Activated naive CD4-positive, alpha-beta T cell treated with anti-CD3 and anti-CD28 coated beads for 36 hours (primary cell): ENCODE measurements at regions of chr4 and their contacts with region 1.

Region 1: GRCh38 chr4:169619959-169620879 is at the start of gene CLCN3:
- DNase-seq: peak; percentile 90
- H3K4me3 Mint-ChIP-seq: peak within 1 kb of the TSS; percentile 93
- H3K27ac Mint-ChIP-seq: peak within 1 kb of the TSS; percentile 96
- H3K4me1 Mint-ChIP-seq: peaks cover 59% of the 10 kb centered on the region
- H3K27me3 Mint-ChIP-seq: no peaks in the 10 kb centered on the region
- total RNA-seq, gene CLCN3: 17.4 to 18.4 TPM

Region 2: DNA sequence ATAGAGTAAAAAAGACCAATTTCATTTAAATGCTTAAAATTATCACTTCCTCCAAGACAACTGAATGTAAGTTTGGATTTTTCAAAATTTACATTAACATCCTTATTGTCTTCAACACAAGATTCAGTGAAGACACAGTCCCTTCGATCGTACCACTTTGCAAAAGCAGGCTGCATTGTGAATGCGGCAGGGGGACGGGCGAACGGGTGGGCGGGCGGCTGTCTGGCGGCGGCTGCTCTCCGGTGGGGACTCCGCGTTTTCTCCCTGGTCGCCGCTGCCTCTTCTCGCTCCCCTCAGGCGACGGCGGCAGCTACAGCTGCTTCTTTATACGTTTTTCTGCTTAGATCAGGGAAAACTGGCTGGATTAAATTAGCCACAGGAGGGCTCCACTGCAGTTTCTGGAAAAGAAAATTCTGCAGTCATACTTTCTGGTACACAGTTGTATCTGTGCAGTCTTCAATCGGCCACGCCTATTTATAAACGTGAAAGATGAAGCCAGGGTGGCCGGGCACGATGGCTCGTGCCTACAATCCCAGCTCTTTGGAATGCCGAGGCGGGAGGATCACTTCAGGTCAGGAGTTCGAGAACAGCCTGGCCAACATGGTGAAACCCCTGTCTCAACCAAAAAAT is 171.4 kb after region 1 on chr4:
- CTCF ChIA-PET with region 1: no interaction called
- intact Hi-C with region 1: loop called (anchors 1 kb)
- DNase-seq: peak; percentile 49
- H3K4me3 Mint-ChIP-seq: peak overlapping the region; percentile 47
- H3K27ac Mint-ChIP-seq: no peak overlapping the region
- H3K4me1 Mint-ChIP-seq: peaks cover 12% of the 10 kb centered on the region
- H3K27me3 Mint-ChIP-seq: peaks cover 43% of the 10 kb centered on the region

Region 3: GRCh38 chr4:169940450-169940849 is 320.2 kb after region 1 on chr4:
- CTCF ChIA-PET with region 1: no interaction called
- intact Hi-C with region 1: no loop called
- DNase-seq: no peak
- H3K4me3 Mint-ChIP-seq: no peak overlapping the region
- H3K27ac Mint-ChIP-seq: no peak overlapping the region
- H3K4me1 Mint-ChIP-seq: no peaks in the 10 kb centered on the region
- H3K27me3 Mint-ChIP-seq: no peaks in the 10 kb centered on the region

Region 4: DNA sequence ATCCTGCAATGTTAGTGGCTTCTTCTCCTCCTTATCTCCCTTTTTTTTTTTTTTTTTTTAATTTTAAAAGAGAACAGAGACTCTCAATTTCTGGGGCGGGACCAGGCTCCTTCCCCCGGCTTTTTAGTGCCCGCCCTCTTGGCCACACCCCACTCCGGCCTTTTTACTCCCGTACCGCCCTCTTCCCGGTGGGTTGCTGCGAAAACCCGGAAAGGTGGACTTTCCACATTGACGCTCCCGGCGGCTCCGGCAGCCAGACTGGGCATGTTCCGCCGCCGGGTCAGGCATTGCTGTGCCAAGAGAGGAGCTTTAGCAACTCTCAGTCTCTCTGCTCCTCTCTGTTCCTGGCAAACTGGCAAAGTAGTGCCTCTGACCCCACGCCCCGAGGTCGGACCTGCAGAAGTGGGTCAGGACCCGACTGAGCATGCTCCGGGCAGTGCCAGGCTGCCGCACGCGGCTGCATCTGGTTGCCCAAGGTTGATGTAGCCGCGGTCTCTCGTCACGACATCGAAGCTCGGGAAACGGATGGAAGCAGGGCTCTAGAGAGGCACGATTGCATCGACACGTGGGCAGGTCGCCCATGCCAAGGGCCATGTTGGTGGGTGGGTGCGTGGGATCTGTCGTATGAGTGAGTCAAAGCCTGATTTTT is 407.1 kb after region 1 on chr4:
- CTCF ChIA-PET with region 1: no interaction called
- intact Hi-C with region 1: loop called (anchors 1 kb)
- DNase-seq: peak; percentile 93
- H3K4me3 Mint-ChIP-seq: peak overlapping the region; percentile 83
- H3K27ac Mint-ChIP-seq: peak overlapping the region; percentile 38
- H3K4me1 Mint-ChIP-seq: peaks cover 7% of the 10 kb centered on the region
- H3K27me3 Mint-ChIP-seq: peaks cover 15% of the 10 kb centered on the region